CD4-positive, alpha-beta memory T cell (primary cell): ENCODE measurements at regions of chr6 and their contacts with region 1.

Region 1: DNA sequence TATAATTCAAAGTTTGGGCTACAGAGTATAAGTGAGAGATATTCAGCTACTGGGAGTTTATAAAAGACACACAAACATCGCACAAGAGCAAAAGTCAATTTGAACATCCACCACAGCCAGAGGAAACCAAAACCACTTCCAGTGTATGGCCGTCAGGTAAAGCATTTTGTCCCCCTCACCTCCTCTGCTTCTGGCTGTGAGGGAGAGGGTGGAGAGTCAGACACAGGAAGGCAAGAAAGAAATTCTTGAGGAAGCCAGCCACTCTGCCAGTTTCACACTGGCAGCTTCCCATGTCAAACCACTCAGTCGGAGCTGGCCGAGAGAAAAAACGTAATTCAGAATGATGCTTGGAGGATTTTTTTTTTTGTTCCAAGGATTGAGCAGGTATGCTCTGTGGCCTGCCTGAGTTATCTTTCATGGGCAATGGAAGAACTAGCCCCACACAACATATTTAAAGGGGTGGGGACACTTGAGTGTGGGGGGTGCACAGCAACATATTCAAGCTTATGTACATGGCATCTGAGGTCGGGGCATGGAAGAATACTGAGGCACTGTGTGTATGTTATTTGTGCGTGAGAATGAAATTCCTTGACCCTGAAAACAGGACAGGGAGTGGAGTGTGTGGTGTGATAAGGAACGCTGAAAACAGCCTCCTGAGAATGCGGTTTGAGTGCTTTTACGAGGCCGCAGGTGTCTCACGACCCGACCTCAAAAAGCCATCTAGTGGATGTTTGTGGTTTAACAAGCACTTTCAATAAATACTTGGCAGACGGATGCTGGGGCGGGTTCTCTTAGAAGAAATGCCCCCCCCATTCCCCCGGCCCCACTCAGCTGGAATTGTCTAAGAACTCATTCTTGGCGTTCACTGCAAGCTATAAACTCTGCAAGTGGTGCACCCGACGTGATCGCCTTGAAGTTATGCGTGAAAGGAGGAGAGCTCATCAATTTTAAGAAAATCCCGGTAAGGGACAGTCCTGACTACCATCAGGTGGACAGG is 27.5 kb upstream of the ZBTB22 start:
- DNase-seq: peak; percentile 81 to 87 (median 84)
- H3K4me3 ChIP-seq: peak overlapping the region; percentile 11 to 61
- H3K4me3 Mint-ChIP-seq: peak overlapping the region; percentile 76 to 92 (median 85)
- H3K27ac ChIP-seq: peak overlapping the region; percentile 79
- H3K27ac Mint-ChIP-seq: peak overlapping the region; percentile 88 to 99 (median 98)
- H3K4me1 ChIP-seq: peaks cover 44% of the 10 kb centered on the region
- H3K4me1 Mint-ChIP-seq: peaks cover 23 to 49% (median 37%) of the 10 kb centered on the region in 4 donors
- H3K27me3 ChIP-seq: no peaks in the 10 kb centered on the region
- H3K27me3 Mint-ChIP-seq: no peaks in the 10 kb centered on the region

Region 2: GRCh38 chr6:33276864-33277662 is 67.9 kb before region 1 on chr6 and contains the start of gene B3GALT4:
- CTCF ChIA-PET with region 1: interaction called, 32 read pairs
- POLR2A ChIA-PET with region 1: interaction called, 63 read pairs
- intact Hi-C with region 1: loop called (anchors 1 kb)
- DNase-seq: peak; percentile 66 to 77 (median 75)
- H3K4me3 ChIP-seq: peak within 1 kb of the TSS; percentile 72 to 79
- H3K4me3 Mint-ChIP-seq: peak within 1 kb of the TSS; percentile 89 to 93 (median 91)
- H3K27ac ChIP-seq: peak within 1 kb of the TSS; percentile 82
- H3K27ac Mint-ChIP-seq: peak within 1 kb of the TSS; percentile 90 to 97 (median 94)
- H3K4me1 ChIP-seq: peaks cover 71% of the 10 kb centered on the region
- H3K4me1 Mint-ChIP-seq: peaks cover 35 to 87% (median 59%) of the 10 kb centered on the region in 4 donors
- H3K27me3 ChIP-seq: no peaks in the 10 kb centered on the region
- H3K27me3 Mint-ChIP-seq: no peaks in the 10 kb centered on the region
- total RNA-seq, gene B3GALT4: 43.3 to 46.7 TPM

Region 3: GRCh38 chr6:33299237-33299944 is 45.6 kb before region 1 on chr6:
- CTCF ChIA-PET with region 1: interaction called, 20 read pairs
- POLR2A ChIA-PET with region 1: interaction called, 117 read pairs
- intact Hi-C with region 1: loop called (anchors 1 kb)
- DNase-seq: peak; percentile 91 to 94 (median 93)
- H3K4me3 ChIP-seq: peak overlapping the region; percentile 71 to 97
- H3K4me3 Mint-ChIP-seq: peak overlapping the region; percentile 99
- H3K27ac ChIP-seq: peak overlapping the region; percentile 94
- H3K27ac Mint-ChIP-seq: peak overlapping the region; percentile 96 to 100 (median 99)
- H3K4me1 ChIP-seq: peaks cover 27% of the 10 kb centered on the region
- H3K4me1 Mint-ChIP-seq: peaks cover 22 to 42% (median 31%) of the 10 kb centered on the region in 4 donors
- H3K27me3 ChIP-seq: no peaks in the 10 kb centered on the region
- H3K27me3 Mint-ChIP-seq: peaks cover 0 to 4% of the 10 kb centered on the region in 2 donors

Region 4: DNA sequence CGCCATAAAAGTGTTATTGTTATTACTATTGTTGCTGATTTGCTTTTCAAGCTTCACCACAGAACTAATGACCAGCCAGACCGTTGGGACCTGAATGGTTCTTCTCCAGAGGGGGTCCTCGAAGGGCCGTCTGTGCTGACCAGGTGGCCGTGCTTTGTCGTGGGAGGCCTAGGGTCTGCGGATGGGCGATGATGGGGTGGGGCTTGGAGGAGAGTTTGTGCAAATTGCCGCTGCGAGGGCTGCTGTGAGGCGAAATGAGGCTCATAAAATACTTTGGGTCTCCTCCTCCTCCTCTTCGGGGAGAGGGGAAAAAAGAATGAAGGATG is 21.4 kb before region 1 on chr6:
- CTCF ChIA-PET with region 1: interaction called, 47 read pairs
- POLR2A ChIA-PET with region 1: interaction called, 6 read pairs
- intact Hi-C with region 1: loop called (anchors 1 kb)
- DNase-seq: no peak
- H3K4me3 ChIP-seq: peak overlapping the region; percentile 53 to 68
- H3K4me3 Mint-ChIP-seq: peak overlapping the region; percentile 94 to 100 (median 98)
- H3K27ac ChIP-seq: peak overlapping the region; percentile 88
- H3K27ac Mint-ChIP-seq: peak overlapping the region; percentile 89 to 100 (median 96)
- H3K4me1 ChIP-seq: peaks cover 47% of the 10 kb centered on the region
- H3K4me1 Mint-ChIP-seq: peaks cover 32 to 59% (median 46%) of the 10 kb centered on the region in 4 donors
- H3K27me3 ChIP-seq: no peaks in the 10 kb centered on the region
- H3K27me3 Mint-ChIP-seq: no peaks in the 10 kb centered on the region

Region 5: DNA sequence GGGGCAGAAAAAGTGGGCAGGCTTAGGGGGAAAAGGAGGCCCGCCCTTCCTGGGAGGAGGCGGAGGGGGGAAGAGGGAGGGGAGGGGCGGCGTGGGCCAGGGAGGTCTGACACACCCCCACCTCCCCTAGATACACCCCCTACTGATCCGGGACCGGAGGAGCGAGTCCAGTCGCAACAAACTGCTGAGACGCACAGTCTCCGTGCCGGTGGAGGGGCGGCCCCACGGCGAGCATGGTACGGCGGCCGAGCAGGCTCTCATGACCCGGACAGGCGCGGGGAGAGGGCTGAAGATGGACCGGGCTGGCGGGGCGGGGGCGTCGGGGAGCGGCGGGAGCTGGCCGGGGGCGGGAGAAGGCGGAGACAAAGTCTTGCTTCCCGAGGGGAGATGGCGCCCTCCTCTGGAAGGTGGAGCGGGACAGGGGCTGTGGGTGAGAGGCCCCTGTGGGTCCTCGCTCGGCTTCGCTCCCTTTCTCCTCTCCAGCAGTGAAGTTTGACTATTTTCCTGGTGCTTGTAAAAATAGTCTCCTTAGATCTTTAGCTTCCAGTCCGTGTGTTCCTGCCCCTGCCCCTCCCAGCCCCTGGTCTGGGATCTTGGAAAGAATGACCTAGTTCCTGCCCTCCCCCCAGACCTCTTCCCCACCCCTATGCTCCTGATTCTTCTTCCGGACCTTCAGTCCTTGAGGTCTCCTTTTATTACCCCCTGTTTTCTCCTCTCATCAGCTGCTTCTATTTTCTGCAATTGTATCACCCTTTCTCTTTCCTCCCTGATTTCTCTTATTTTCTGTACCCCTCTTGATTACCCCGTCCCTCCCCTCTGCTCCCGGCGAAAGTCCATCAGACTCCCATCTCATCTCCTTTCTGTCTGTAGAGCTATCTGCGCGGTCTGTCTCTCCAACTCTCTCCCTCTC is 80.9 kb after region 1 on chr6:
- CTCF ChIA-PET with region 1: interaction called, 7 read pairs
- POLR2A ChIA-PET with region 1: interaction called, 28 read pairs
- intact Hi-C with region 1: loop called (anchors 1 kb)
- DNase-seq: peak; percentile 80 to 87 (median 80)
- H3K4me3 ChIP-seq: peak overlapping the region; percentile 59 to 63
- H3K4me3 Mint-ChIP-seq: peak overlapping the region; percentile 84 to 99 (median 94)
- H3K27ac ChIP-seq: peak overlapping the region; percentile 90
- H3K27ac Mint-ChIP-seq: peak overlapping the region; percentile 96 to 100 (median 98)
- H3K4me1 ChIP-seq: peaks cover 61% of the 10 kb centered on the region
- H3K4me1 Mint-ChIP-seq: peaks cover 62 to 96% (median 68%) of the 10 kb centered on the region in 4 donors
- H3K27me3 ChIP-seq: no peaks in the 10 kb centered on the region
- H3K27me3 Mint-ChIP-seq: no peaks in the 10 kb centered on the region